HepG2 (cell line): ENCODE measurements at regions of chr13 and their contacts with region 1.

Region 1: DNA sequence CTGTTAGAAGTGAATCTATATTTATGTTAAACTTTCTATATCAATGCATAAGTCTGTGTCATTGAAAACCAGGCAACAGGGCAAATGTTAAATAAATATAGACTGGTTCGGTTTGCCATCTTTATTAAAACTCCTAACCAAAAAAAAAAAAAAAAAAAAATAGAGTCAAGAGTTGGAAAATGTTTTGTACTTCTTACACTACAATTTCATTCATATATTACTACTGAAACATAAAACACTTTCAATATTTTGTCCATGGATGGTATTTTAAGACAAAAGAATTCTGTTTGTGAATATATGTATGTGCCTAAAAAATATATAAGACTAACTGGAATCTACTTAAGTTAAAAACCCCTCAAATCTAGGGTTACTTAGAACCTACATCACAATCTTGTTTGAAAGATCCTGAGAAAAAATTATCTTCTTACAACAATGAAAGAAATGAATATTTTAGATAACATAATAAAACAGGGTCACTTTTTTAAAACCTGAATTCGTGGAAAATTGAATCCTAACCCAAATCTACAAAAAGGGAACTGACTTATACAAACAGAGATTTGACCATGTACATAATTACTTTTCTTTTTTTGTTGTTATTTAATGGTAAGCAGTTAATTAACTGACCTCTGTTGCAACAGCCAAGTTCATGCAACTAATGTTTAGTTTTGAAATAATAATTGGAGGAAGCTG is 5.1 kb downstream of the DACH1 start:
- DNase-seq: no peak
- ATAC-seq: no peak
- H3K4me3 ChIP-seq: no peak overlapping the region
- H3K27ac ChIP-seq: no peak overlapping the region
- H3K4me1 ChIP-seq: no peaks in the 10 kb centered on the region
- H3K27me3 ChIP-seq: peaks cover 7 to 22% of the 10 kb centered on the region in 2 experiments; a peak in 4 of 5 replicates
- CTCF ChIP-seq: no peak
- EP300 ChIP-seq: no peak
- POLR2A ChIP-seq: no peak
- RAD21 ChIP-seq: no peak

Region 2: DNA sequence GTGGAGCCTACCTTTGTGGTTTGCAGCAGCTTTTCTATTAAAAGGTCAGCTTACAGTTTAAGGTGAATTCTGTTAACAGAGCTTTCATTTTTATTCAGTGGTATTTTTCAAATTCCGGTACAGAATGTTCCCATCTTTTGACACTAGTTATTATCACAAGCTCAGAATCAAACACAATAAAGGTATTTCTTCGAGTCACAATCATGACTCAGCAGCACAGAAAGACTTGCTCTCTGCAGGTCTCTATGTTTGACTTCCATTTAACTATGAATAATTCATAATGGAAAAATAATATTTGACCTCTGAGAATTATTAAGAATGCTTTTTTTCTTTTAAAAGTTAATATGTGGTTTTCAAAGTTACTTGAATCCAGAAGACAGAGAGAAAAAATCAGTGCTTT is 23.1 kb before region 1 on chr13:
- CTCF ChIA-PET with region 1: no interaction called
- POLR2A ChIA-PET with region 1: no interaction called
- in situ Hi-C with region 1: no loop called
- intact Hi-C with region 1: loop called (anchors 2 kb)
- DNase-seq: no peak
- ATAC-seq: no peak
- H3K4me3 ChIP-seq: no peak overlapping the region
- H3K27ac ChIP-seq: no peak overlapping the region
- H3K4me1 ChIP-seq: no peaks in the 10 kb centered on the region
- H3K27me3 ChIP-seq: no peaks in the 10 kb centered on the region
- CTCF ChIP-seq: no peak
- EP300 ChIP-seq: no peak
- POLR2A ChIP-seq: no peak
- RAD21 ChIP-seq: no peak